ENCODE measurements at regions of chr9 and their contacts with region 1.

Region 1: DNA sequence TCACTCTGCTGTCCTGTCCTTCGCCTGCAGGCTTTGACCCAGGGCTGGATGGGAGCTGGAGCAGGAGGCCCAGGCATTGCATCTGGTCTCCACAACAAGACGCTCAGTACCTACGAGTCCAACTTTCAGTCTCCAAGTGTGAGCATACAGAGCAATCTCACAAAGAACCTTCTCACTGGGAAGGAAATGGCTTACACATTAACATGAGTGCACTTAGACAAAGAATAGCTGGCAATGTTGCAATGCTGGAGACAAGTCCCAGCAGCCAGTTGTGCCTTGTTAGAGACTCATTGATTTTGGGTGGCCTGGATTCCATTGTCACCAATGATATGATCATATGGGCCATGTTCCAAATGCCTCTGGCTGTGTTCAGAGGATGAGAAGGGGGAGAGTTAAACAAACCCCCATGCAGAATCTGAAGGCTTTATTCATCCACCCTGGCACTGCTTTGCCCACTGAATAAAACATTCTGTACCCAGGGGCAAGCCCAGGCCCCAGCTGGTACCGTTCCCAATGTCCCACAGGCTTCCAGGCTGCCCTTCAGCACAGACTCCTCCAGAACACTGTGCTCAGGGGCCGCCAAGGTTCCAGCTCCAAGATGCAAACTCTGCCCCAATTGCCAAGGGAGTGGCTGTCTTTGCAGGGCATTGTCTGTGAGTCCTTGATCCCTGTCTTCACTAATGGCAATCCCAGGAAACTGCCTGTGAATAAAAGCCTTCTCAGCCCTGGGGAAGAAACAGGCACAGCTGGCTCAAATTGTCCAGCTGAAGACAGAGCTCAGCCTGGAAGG is 185.5 kb downstream of the HSD17B3 start:
- DNase-seq: no peak
- H3K4me3 ChIP-seq: no peak overlapping the region
- H3K27ac ChIP-seq: no peak overlapping the region
- H3K4me1 ChIP-seq: no peaks in the 10 kb centered on the region
- H3K27me3 ChIP-seq: no peaks in the 10 kb centered on the region
- CTCF ChIP-seq: no peak

Region 2: DNA sequence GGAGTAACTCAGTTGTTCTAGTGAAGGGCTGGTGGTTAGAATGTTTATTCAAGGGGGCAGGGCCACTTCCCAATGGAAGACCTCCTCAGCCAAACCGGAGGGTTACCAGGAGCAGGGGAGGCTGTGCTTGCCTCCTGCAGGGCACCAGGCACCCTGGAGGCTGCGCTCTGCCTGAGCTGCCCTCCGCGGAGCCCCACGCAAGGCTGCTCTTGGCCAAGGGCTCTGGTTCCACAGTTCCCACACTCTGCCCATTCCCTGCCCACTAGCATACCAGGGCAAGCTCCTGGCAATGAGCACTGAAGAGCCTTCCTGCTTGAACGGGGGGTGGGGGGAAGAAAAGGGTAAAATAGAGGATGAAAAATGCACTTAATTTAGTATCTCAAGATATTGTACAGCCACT is 564.2 kb before region 1 on chr9:
- CTCF ChIA-PET with region 1: no interaction called
- POLR2A ChIA-PET with region 1: interaction called, 14 read pairs
- intact Hi-C with region 1: no loop called
- DNase-seq: no peak
- H3K4me3 ChIP-seq: no peak overlapping the region
- H3K27ac ChIP-seq: no peak overlapping the region
- H3K4me1 ChIP-seq: no peaks in the 10 kb centered on the region
- H3K27me3 ChIP-seq: no peaks in the 10 kb centered on the region
- CTCF ChIP-seq: no peak

Region 3: DNA sequence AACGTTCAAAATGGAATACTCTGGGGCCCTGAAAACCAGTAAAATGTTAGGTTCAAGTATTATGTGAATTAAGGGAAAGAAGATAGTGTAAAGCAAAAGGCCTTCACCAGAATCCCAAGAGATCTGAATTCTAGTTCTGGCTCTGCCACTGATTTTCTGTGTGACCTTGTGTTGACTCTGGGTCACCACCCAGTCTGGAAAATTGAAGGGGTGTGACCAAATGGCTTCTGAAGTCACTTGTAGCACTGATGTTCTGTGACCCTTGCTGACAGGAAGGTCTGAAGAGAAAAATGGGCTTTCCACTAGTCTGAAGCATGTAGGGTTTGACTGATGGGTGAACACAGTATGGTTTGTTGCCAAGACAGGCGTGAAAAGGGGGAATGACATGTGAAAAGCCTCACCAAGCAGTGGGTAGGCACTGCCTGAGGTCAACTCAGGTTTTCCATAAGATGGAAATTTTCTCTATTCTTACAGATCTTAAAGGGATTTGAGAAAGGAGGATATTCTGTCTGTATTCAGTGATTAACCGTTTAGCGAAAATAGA is 1899.7 kb after region 1 on chr9:
- CTCF ChIA-PET with region 1: no interaction called
- POLR2A ChIA-PET with region 1: interaction called, 19 read pairs
- intact Hi-C with region 1: no loop called
- DNase-seq: no peak
- H3K4me3 ChIP-seq: no peak overlapping the region
- H3K27ac ChIP-seq: no peak overlapping the region
- H3K4me1 ChIP-seq: no peaks in the 10 kb centered on the region
- H3K27me3 ChIP-seq: no peaks in the 10 kb centered on the region
- CTCF ChIP-seq: no peak